Thyroid gland (tissue), 4 donors: ENCODE measurements at regions of chr1 and their contacts with region 1.

Region 1: GRCh38 chr1:10430216-10431069 is at the start of gene CENPS:
- DNase-seq: peak; percentile 89 to 90
- H3K4me3 ChIP-seq: peak within 1 kb of the TSS; percentile 28 to 45 (median 35)
- H3K27ac ChIP-seq: peak within 1 kb of the TSS in 1 of 3 donors; percentile 25
- H3K4me1 ChIP-seq: peaks cover 8% of the 10 kb centered on the region in 2 donors
- H3K27me3 ChIP-seq: no peaks in the 10 kb centered on the region
- CTCF ChIP-seq: peak; percentile 73 to 99 (median 95)
- POLR2A ChIP-seq: peak in 1 of 2 donors; percentile 63
- total RNA-seq, gene CENPS: 5.8 to 22.4 (median 11.4) TPM

Region 2: DNA sequence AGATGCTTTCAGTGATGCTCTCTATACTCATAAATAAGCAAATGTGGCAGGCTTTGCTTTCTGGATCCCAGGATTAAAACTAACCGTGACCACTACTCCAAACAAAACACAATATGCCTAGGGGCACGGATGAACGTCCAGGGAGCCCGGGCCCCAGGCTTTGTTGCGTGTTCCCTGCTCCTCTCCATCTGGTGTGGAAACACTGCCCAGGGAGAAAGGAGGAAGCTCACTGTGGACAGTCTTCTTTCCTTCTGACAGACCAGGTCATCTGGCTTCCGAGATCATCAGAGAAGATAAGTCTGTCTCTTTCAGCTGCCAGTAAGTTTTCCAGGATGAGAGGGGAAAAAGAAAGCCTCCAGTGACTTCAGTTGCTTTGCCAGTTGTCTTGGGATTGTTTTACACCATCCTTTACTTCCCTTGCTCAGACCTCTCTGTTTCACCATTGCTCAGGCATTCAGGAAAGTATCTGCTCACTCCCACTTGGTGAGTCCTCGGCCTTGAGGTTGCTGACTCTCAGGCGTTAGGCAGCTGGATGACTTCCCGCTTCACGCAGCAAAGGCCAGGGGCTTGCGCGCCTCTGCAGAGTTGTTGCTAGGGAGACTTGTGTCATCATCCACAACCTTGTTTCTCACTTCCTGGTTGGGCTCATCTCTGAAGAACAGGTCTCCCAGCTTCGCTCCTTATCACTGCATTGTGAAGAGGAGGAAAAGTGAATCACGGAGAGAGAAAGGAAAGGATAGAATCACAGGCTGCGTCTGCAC is 52.2 kb before region 1 on chr1:
- intact Hi-C with region 1: loop called (anchors 5 kb)
- DNase-seq: no peak
- H3K4me3 ChIP-seq: no peak overlapping the region
- H3K27ac ChIP-seq: peak overlapping the region in 2 of 3 donors; percentile 31 to 73
- H3K4me1 ChIP-seq: peaks cover 13 to 26% of the 10 kb centered on the region in 2 donors
- H3K27me3 ChIP-seq: no peaks in the 10 kb centered on the region
- CTCF ChIP-seq: no peak
- POLR2A ChIP-seq: no peak

Region 3: GRCh38 chr1:10724948-10725847 is 294.8 kb after region 1 on chr1:
- intact Hi-C with region 1: no loop called
- DNase-seq: peak; percentile 91 to 93
- H3K4me3 ChIP-seq: no peak overlapping the region
- H3K27ac ChIP-seq: peak overlapping the region; percentile 77 to 82 (median 78)
- H3K4me1 ChIP-seq: peaks cover 41 to 44% of the 10 kb centered on the region in 2 donors
- H3K27me3 ChIP-seq: no peaks in the 10 kb centered on the region
- CTCF ChIP-seq: no peak
- POLR2A ChIP-seq: no peak

Region 4: DNA sequence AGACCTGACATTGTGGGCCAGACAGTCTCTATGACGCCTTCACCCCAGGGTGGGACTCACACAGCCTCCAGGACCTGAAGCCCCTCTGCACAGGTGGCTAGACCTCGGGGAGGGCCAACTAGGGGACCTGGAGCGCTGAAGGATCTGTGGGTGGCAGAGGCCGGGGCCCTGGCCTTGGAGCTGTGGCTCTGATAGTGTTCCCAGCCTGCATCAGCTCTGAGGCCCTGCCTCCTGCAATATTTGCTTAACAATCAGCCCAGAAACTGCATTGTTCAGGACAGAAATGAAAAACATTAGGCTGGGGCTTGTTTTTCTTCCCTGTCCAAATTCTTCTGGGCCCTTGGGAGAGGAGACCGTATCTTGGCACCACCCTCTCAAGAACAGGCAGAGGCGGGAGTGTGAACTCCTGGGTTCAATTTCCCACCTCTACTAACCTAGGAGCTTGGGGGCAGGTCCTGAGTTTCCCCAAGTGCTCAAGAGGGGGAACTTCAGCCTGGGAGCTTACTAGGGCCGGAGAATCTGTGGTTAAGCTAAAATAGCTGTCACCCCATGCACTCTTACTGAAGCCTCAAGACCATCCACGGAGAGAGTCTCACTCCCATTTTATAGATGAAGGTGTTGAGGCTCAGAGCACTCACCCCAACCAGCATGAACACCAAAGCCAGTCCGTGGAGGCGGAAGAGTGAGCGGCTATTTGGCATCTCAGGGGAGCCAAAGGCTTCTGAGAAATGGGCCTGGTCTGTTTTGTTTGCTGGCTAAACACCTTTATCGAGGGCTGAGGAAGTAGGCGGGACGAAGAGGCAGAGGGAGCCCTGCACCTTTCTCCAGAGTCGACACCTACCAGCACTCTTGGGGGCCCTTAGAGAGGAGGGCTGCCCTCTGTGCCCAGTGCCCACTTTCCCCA is 384.8 kb after region 1 on chr1:
- intact Hi-C with region 1: no loop called
- DNase-seq: no peak
- H3K4me3 ChIP-seq: no peak overlapping the region
- H3K27ac ChIP-seq: no peak overlapping the region
- H3K4me1 ChIP-seq: peaks cover 7 to 9% of the 10 kb centered on the region in 2 donors
- H3K27me3 ChIP-seq: no peaks in the 10 kb centered on the region
- CTCF ChIP-seq: no peak
- POLR2A ChIP-seq: no peak